PC-3 (cell line): ENCODE measurements at regions of chr7 and their contacts with region 1.

Region 1: GRCh38 chr7:108016841-108017775 is 14.1 kb upstream of the LAMB1 start:
- DNase-seq: peak; percentile 75
- ATAC-seq: peak; percentile 61
- H3K4me3 ChIP-seq: no peak overlapping the region
- H3K27ac ChIP-seq: peak overlapping the region; percentile 97
- H3K4me1 ChIP-seq: peaks cover 58% of the 10 kb centered on the region
- H3K27me3 ChIP-seq: no peaks in the 10 kb centered on the region
- CTCF ChIP-seq: peak; percentile 69

Region 2: DNA sequence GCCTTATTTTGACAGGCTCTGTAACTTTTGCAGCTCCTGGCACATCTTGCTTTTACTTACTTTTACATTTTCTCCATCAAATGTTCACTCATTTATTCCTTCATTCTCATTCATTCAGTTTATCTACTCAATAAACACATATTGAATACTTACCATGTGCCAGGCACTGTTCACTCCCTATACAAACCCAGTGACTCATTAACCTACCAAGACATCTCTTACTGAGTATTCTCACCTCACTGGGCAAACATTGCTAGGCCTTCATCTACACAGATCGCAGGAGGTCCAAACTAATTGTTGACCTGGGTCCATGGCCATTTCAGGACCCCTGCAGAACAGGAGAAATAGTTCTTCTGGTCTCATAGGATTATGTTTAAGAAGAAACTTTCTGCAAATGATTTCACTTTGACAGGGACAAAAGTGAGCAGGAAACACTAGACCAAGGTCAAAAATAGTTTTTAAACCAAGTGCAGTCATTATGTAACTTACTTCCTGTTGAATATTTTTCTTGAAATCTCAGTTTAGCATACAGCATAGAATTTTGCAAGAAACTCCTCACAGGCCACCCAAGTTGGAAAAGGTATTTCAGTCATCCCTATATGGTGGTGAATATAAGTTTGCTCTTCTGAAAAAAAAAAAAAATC is 338.9 kb before region 1 on chr7:
- CTCF ChIA-PET with region 1: no interaction called
- POLR2A ChIA-PET with region 1: no interaction called
- intact Hi-C with region 1: no loop called
- DNase-seq: no peak
- ATAC-seq: peak; percentile 38; the same call in 1 of the 2 replicates
- H3K4me3 ChIP-seq: no peak overlapping the region
- H3K27ac ChIP-seq: no peak overlapping the region
- H3K4me1 ChIP-seq: no peaks in the 10 kb centered on the region
- H3K27me3 ChIP-seq: no peaks in the 10 kb centered on the region
- CTCF ChIP-seq: no peak

Region 3: DNA sequence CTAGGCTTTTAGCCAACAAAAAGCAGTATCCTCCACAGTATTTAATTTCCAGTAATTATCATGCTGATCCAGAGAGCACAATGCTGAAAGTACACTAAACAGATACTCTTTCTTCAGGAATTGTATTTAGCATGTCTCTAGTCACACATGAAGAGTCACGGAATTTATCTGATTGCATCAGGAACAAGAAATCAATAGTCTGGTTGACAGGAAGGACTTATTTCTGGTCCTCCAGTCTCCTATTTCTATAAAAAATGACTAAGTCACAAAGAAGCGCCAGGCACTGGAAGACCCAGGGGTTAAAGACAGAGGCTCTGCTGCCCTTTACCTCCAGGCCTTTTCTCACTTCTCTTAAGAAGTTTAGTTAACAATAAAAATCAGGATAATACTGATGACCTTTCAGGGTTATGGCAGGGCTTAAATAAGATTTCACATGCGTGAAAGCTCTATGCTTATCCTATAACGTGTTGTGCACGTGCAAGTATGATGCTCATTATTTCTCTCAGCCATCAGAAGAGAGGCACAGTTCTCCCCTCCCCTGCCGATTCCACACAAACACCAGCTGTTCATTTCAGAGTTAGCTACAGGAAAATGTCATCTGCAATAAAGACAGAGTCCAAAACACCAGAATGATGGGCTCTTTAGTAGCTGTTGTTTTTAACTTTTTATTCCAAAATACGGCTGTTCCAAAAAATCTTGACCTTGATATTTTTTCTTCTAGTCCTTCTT is 319.6 kb before region 1 on chr7:
- CTCF ChIA-PET with region 1: no interaction called
- POLR2A ChIA-PET with region 1: no interaction called
- intact Hi-C with region 1: no loop called
- DNase-seq: no peak
- ATAC-seq: no peak
- H3K4me3 ChIP-seq: no peak overlapping the region
- H3K27ac ChIP-seq: no peak overlapping the region
- H3K4me1 ChIP-seq: peaks cover 6% of the 10 kb centered on the region; the same call in 1 of the 2 replicates
- H3K27me3 ChIP-seq: no peaks in the 10 kb centered on the region
- CTCF ChIP-seq: no peak

Region 4: DNA sequence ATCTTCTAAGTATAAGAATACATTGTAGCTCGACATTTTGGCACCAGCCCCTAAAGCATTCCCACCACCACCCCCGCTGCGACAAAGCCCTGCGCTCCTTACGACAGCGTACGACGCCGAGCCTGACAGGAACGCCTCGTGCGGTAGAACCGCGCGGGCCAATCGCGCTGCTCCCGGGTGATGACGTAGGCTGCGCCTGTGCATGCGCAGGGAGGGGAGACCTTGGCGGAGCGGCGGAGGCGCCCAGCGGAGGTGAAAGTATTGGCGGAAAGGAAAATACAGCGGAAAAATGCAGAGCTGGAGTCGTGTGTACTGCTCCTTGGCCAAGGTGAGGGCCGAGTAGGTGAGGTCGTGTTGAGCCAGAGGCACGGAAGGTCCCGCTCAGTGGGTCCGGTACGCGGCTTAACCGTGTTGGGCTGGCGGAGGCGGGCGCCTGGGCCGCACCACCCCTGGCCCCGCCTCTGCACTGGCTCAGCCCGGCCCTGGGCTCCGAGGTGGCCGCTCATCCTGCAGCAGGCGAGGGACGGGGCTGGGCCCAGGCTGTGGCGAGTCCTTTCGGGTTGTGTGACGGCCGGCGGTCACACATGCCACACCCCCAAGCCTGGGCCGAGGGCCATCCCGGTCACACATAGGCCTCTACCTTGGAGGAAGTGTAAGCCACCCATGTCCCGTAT is 126.0 kb before region 1 on chr7 and contains the start of gene DLD:
- CTCF ChIA-PET with region 1: no interaction called
- POLR2A ChIA-PET with region 1: no interaction called
- intact Hi-C with region 1: loop called (anchors 5 kb)
- DNase-seq: peak; percentile 93
- ATAC-seq: peak; percentile 96
- H3K4me3 ChIP-seq: peak within 1 kb of the TSS; percentile 81
- H3K27ac ChIP-seq: peak within 1 kb of the TSS; percentile 71
- H3K4me1 ChIP-seq: peaks cover 31% of the 10 kb centered on the region
- H3K27me3 ChIP-seq: no peaks in the 10 kb centered on the region
- CTCF ChIP-seq: no peak
- total RNA-seq, gene DLD: 53.6 and 64.0 TPM in 2 replicates

Region 5: GRCh38 chr7:107982918-107983389 is 34.2 kb before region 1 on chr7:
- CTCF ChIA-PET with region 1: interaction called, 7 read pairs
- POLR2A ChIA-PET with region 1: interaction called, 3 read pairs
- intact Hi-C with region 1: loop called (anchors 1 kb)
- DNase-seq: peak; percentile 52
- ATAC-seq: peak; percentile 94
- H3K4me3 ChIP-seq: no peak overlapping the region
- H3K27ac ChIP-seq: peak overlapping the region; percentile 15; the same call in 1 of the 2 replicates
- H3K4me1 ChIP-seq: peaks cover 5% of the 10 kb centered on the region; the same call in 1 of the 2 replicates
- H3K27me3 ChIP-seq: no peaks in the 10 kb centered on the region
- CTCF ChIP-seq: peak; percentile 41; the same call in 1 of the 2 replicates

Region 6: DNA sequence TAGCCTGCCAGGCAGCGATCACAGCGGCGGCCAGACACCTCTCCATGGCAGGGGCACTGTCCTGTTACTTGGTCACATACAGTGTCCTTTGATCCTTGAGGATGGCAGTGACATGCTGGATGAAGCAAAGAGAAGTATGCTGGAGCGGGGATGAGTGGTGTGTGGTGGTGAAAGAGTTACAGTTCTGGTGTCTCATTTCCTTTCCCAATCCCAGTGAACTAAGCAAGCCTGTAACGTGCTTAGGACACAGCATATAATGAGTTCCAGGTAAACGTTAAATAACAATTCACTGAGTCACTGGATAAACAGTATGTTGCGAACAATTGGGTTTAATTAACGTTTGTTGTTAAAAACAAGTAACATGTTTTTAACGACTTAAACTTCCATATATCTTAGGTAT is 49.4 kb after region 1 on chr7:
- CTCF ChIA-PET with region 1: no interaction called
- POLR2A ChIA-PET with region 1: no interaction called
- intact Hi-C with region 1: loop called (anchors 5 kb)
- DNase-seq: peak; percentile 52
- ATAC-seq: peak; percentile 84
- H3K4me3 ChIP-seq: no peak overlapping the region
- H3K27ac ChIP-seq: no peak overlapping the region
- H3K4me1 ChIP-seq: peaks cover 6% of the 10 kb centered on the region
- H3K27me3 ChIP-seq: no peaks in the 10 kb centered on the region
- CTCF ChIP-seq: no peak

Region 7: DNA sequence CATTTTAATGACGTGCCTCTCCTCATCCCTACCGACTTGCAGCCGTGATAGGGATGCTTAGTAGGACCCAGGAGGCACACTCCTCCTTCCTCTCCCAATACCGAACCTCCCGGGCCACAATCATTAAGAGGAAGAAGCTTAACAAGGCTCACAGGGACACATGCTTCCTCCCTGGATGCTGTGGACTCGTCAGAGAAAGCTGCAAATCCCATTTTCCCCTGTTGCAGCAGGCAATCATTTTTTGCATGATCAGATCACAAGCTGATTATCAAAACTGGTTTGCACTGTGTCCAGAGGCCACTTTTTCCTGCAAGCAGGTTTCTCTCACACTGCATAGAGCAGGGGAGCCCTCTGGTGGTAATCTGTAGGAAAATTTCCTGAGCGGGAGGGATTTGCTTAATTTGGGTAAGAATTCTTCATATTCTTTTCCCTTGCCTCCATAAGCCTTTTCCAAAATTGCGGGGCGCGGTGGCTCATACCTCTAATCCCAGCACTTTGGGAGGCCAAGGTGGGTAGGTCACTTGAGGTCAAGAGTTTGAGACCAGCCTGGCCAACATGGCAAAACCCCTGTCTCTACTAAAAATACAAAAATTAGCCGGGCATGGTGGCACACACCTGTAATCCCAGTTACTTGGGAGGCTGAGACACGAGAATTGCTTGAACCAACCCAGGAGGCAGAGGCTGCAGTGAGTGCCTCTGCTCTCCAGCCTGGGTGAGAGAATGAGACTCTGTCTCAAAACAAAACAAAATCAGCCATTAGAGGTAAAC is 129.1 kb after region 1 on chr7:
- CTCF ChIA-PET with region 1: no interaction called
- POLR2A ChIA-PET with region 1: no interaction called
- intact Hi-C with region 1: loop called (anchors 2 kb)
- DNase-seq: peak; percentile 84
- ATAC-seq: peak; percentile 83
- H3K4me3 ChIP-seq: peak overlapping the region; percentile 51
- H3K27ac ChIP-seq: no peak overlapping the region
- H3K4me1 ChIP-seq: no peaks in the 10 kb centered on the region
- H3K27me3 ChIP-seq: peaks cover 22% of the 10 kb centered on the region
- CTCF ChIP-seq: peak; percentile 88